Transverse colon (tissue), 4 donors: ENCODE measurements at regions of chr9 and their contacts with region 1.

Region 1: GRCh38 chr9:93682232-93682968 is 106.0 kb downstream of the PHF2 start:
- DNase-seq: peak; percentile 70
- H3K4me3 ChIP-seq: no peak overlapping the region
- H3K27ac ChIP-seq: no peak overlapping the region
- H3K4me1 ChIP-seq: peaks cover 0 to 3% (median under 1%) of the 10 kb centered on the region in 4 donors
- H3K27me3 ChIP-seq: no peaks in the 10 kb centered on the region
- CTCF ChIP-seq: peak; percentile 82 to 87 (median 82)
- EP300 ChIP-seq: no peak
- POLR2A ChIP-seq: no peak

Region 2: GRCh38 chr9:93860694-93861658 is 178.6 kb after region 1 on chr9:
- in situ Hi-C with region 1: no loop called
- intact Hi-C with region 1: no loop called
- DNase-seq: no peak
- H3K4me3 ChIP-seq: no peak overlapping the region
- H3K27ac ChIP-seq: no peak overlapping the region
- H3K4me1 ChIP-seq: no peaks in the 10 kb centered on the region
- H3K27me3 ChIP-seq: peaks cover 47% of the 10 kb centered on the region
- CTCF ChIP-seq: no peak
- EP300 ChIP-seq: no peak
- POLR2A ChIP-seq: no peak

Region 3: DNA sequence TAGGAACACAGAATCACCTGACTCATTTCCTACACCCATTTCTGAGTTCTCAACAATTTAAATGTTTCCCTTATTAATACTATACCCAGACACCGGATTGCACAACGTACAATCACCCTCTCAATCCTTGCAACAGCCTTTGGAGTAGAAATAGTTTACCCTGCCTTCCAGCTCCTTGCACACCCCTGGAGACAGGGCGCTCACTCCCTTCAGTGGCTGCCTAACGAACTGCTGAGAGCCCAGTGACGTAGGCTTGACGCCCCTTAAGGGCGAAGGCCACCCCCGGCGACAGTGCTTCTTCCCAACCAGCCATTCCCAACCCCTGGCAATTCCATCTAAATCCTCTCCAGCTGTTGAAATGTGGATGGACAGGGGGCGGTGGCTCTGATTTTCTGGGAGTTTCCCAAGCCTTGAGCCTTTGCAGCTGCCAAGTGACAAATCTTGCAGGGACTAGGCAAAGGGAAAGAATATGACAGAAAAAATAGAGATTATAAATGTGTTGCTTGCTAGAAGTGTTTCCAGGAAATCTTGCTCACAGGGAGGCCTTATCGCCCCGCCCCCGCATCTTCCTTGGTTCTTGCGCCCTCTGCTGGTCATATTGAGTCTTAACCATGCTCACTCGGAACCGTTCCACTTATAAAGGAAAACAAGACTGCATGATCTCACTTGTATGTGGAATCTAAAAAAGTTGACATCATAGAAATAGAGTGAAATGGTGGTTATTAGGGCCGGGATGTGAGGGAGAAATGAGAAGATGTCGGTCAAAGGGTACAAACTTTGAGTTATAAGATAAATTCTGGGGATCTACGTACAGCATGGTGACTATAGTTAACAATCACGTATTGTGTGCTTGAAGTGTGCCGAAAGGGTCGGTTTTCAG is 280.4 kb after region 1 on chr9:
- in situ Hi-C with region 1: loop called in 3 of 4 experiments (anchors 10 to 25 kb)
- intact Hi-C with region 1: loop called (anchors 2 kb)
- DNase-seq: peak; percentile 83
- H3K4me3 ChIP-seq: no peak overlapping the region
- H3K27ac ChIP-seq: no peak overlapping the region
- H3K4me1 ChIP-seq: peaks cover 18 to 33% (median 27%) of the 10 kb centered on the region in 4 donors
- H3K27me3 ChIP-seq: peaks cover 43% of the 10 kb centered on the region
- CTCF ChIP-seq: peak; percentile 77 to 85 (median 82)
- EP300 ChIP-seq: no peak
- POLR2A ChIP-seq: no peak

Region 4: GRCh38 chr9:94213511-94214124 is 531.2 kb after region 1 on chr9:
- in situ Hi-C with region 1: loop called in 1 of 4 experiments (anchors 25 kb)
- intact Hi-C with region 1: no loop called
- DNase-seq: peak; percentile 76
- H3K4me3 ChIP-seq: no peak overlapping the region
- H3K27ac ChIP-seq: no peak overlapping the region
- H3K4me1 ChIP-seq: no peaks in the 10 kb centered on the region
- H3K27me3 ChIP-seq: no peaks in the 10 kb centered on the region
- CTCF ChIP-seq: peak; percentile 80 to 89 (median 86)
- EP300 ChIP-seq: no peak
- POLR2A ChIP-seq: no peak